Dorsolateral prefrontal cortex (tissue), 120 donors: ENCODE measurements at regions of chr17 and their contacts with region 1.

Region 1: DNA sequence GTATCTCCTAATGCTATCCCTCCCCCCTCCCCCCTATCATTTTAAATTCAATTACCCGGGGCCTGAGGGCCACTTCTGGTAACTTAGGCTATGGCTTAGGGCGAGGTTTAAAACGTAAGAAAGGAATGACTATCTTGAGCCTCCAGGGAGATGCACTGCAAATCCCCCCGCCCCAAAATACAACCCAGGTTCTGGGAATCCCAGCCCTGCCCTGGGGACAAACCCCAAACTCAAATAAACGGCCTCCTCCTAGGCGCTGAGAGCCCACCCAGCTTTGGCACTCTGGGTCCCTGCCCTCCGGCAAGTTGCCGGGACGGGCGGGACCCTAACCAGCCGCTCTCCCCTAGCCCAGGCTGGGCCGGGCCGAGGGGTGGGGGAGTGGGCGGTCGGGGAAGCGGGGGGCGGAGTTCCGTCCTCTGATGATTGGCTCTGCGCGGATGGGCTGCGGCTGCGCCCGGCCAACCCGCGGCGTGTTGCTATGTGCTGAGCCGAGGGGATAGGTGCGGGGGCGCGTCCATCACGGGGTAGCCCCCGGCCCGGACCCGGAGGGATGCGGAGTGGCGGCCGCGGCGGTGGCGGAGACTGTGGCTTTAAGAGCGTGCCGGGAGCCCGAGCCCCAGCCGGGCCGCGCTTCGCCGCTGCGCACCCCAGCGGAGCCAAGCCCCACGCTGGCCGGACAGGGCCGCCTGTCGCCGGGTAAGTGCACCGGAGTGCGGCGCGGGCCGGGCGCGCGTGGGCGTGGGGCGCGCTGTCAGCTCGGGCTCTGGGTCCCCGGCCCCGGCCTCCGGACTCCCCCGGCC is at the start of gene YPEL2:
- DNase-seq: peak; percentile 95 to 99 (median 98)
- H3K4me3 ChIP-seq: peak within 1 kb of the TSS; percentile 59 to 100 (median 96)
- H3K27ac ChIP-seq: peak within 1 kb of the TSS; percentile 73 to 99 (median 96)
- H3K27me3 ChIP-seq: no peaks in the 10 kb centered on the region
- CTCF ChIP-seq: peak in 11 of 56 donors; percentile 9 to 41 (median 21)
- total RNA-seq, gene YPEL2: 35.6 to 117 (median 58.9) TPM

Region 2: DNA sequence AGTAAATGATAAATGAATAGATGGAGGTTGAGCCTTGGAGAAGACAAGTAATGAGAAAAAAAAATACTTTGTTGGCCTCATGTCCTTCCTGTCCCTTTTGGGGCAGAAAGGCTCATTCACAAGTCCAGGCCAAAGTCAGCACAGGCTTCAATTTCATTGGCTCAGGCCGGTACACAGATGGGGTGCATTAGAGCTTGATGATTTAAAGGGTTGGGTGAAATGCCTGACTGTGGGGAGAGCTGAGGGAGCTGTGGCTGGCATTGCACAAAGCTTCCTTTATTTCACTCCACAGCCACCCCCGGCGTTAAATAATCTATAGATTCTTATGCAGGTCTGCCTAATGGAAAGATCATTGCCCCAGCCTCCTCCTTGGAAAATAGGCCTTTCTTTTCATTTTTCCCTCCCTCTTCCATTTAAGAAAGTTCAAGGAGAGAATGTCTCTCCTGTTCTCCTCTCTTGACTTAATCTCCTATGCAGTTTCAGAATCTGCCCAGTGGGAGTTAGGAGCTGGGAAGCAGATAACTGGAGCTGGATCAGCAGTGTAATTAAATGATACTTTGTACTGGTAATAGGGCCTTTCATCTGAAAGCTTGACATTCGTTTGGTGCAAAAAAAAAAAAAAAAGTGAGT is 24.5 kb after region 1 on chr17:
- intact Hi-C with region 1: loop called in 1 of 2 experiments (anchors 2 kb)
- DNase-seq: peak in 7 of 10 donors; percentile 29 to 84 (median 59)
- H3K4me3 ChIP-seq: peak overlapping the region in 5 of 59 donors; percentile 3 to 27 (median 5)
- H3K27ac ChIP-seq: peak overlapping the region in 58 of 59 donors; percentile 36 to 100 (median 98)
- H3K27me3 ChIP-seq: no peaks in the 10 kb centered on the region
- CTCF ChIP-seq: peak in 3 of 56 donors; percentile 17 to 33 (median 23)

Region 3: GRCh38 chr17:59378458-59379074 is 47.2 kb after region 1 on chr17:
- intact Hi-C with region 1: loop called in 1 of 2 experiments (anchors 5 kb)
- DNase-seq: no peak
- H3K4me3 ChIP-seq: no peak overlapping the region
- H3K27ac ChIP-seq: peak overlapping the region; percentile 19 to 100 (median 99)
- H3K27me3 ChIP-seq: no peaks in the 10 kb centered on the region
- CTCF ChIP-seq: no peak

Region 4: GRCh38 chr17:59440784-59441441 is 109.6 kb after region 1 on chr17:
- intact Hi-C with region 1: loop called in 1 of 2 experiments (anchors 2 kb)
- DNase-seq: peak; percentile 70 to 96 (median 90)
- H3K4me3 ChIP-seq: peak overlapping the region in 35 of 59 donors; percentile 1 to 51 (median 15)
- H3K27ac ChIP-seq: peak overlapping the region in 57 of 59 donors; percentile 9 to 90 (median 73)
- H3K27me3 ChIP-seq: no peaks in the 10 kb centered on the region
- CTCF ChIP-seq: peak; percentile 74 to 98 (median 93)

Region 5: DNA sequence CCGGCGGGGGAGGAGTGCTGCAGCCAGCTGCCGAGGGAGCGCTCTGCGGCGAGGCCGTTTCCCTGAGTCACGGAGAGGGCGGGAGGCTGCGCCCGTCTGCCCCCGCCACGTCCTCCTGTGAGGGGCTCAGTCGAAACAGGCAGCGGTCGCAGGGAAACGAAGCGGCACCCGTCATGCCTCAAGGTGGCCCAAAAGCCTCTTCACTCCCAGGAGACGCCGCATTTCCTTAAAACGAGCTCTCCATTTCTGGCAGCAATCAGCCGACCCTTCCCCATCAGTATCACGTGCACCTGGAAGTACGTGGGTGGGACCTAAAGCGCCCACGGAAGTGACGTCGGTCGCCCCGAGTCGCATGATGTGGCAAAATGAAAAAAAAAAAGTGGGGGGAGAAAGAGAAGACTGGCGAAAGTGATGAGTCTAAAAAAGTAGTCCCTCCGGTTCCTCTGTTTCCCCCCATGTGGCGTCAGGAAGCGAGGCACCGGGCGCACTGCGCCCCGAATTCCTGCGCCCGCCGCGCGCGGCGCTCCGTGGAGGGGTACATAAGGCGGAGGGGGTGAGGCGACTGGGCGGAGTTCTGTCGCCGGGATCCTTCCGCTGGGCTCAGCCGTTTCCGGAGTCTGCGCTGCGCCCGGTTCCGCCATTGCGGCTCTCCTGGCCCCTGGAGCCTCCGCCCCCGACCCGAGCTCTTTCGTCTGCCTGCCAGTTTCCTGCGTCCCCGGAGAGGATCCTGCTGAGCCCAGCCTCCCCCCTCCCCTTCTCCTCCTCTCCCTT is 288.1 kb after region 1 on chr17 and contains the start of gene CLTC:
- intact Hi-C with region 1: loop called in 1 of 2 experiments (anchors 10 kb)
- DNase-seq: peak; percentile 80 to 98 (median 92)
- H3K4me3 ChIP-seq: peak within 1 kb of the TSS; percentile 57 to 98 (median 89)
- H3K27ac ChIP-seq: peak within 1 kb of the TSS; percentile 96 to 100 (median 99)
- H3K27me3 ChIP-seq: no peaks in the 10 kb centered on the region
- CTCF ChIP-seq: peak in 27 of 56 donors; percentile 1 to 51 (median 13)
- total RNA-seq, gene CLTC: 248 to 525 (median 428) TPM